ENCODE measurements at regions of chr6 and their contacts with region 1.

Region 1: GRCh38 chr6:33607784-33608161 is 13.3 kb upstream of the ITPR3 start:
- DNase-seq: no peak
- H3K4me3 ChIP-seq: no peak overlapping the region
- CTCF ChIP-seq: peak; percentile 15

Region 2: GRCh38 chr6:33049323-33050013 is 558.3 kb before region 1 on chr6:
- in situ Hi-C with region 1: no loop called
- DNase-seq: no peak
- H3K4me3 ChIP-seq: no peak overlapping the region
- CTCF ChIP-seq: peak; percentile 5

Region 3: GRCh38 chr6:33672808-33673207 is 65.0 kb after region 1 on chr6:
- in situ Hi-C with region 1: no loop called
- DNase-seq: peak; percentile 80
- H3K4me3 ChIP-seq: no peak overlapping the region
- CTCF ChIP-seq: peak; percentile 60

Region 4: GRCh38 chr6:33711140-33712129 is 103.7 kb after region 1 on chr6 and contains the start of gene UQCC2:
- in situ Hi-C with region 1: loop called (anchors 10 kb)
- DNase-seq: peak; percentile 90
- H3K4me3 ChIP-seq: peak within 1 kb of the TSS; percentile 91
- CTCF ChIP-seq: peak; percentile 63